GM12878 (cell line): ENCODE measurements at regions of chr22 and their contacts with region 1.

Region 1: GRCh38 chr22:36470162-36470993 is 11.1 kb downstream of the TXN2 start:
- DNase-seq: no peak
- ATAC-seq: peak; percentile 99
- H3K4me3 ChIP-seq: no peak overlapping the region
- H3K27ac ChIP-seq: no peak overlapping the region
- H3K4me1 ChIP-seq: peaks cover 4% of the 10 kb centered on the region
- H3K27me3 ChIP-seq: no peaks in the 10 kb centered on the region
- CTCF ChIP-seq: peak; percentile 96 to 98 (median 98)
- EP300 ChIP-seq: no peak
- POLR2A ChIP-seq: peak; percentile 40; the same call in 1 of the 2 replicates
- RAD21 ChIP-seq: peak; percentile 96

Region 2: GRCh38 chr22:36010882-36011281 is 459.5 kb before region 1 on chr22:
- CTCF ChIA-PET with region 1: no interaction called
- POLR2A ChIA-PET with region 1: no interaction called
- RAD21 ChIA-PET with region 1: no interaction called
- SMC1A ChIA-PET with region 1: no interaction called
- in situ Hi-C with region 1: no loop called
- intact Hi-C with region 1: no loop called
- DNase-seq: no peak
- ATAC-seq: no peak
- H3K4me3 ChIP-seq: no peak overlapping the region
- H3K27ac ChIP-seq: no peak overlapping the region
- H3K4me1 ChIP-seq: no peaks in the 10 kb centered on the region
- H3K27me3 ChIP-seq: no peaks in the 10 kb centered on the region; a peak in 1 of 4 replicates
- CTCF ChIP-seq: no peak
- EP300 ChIP-seq: no peak
- POLR2A ChIP-seq: no peak
- RAD21 ChIP-seq: no peak

Region 3: DNA sequence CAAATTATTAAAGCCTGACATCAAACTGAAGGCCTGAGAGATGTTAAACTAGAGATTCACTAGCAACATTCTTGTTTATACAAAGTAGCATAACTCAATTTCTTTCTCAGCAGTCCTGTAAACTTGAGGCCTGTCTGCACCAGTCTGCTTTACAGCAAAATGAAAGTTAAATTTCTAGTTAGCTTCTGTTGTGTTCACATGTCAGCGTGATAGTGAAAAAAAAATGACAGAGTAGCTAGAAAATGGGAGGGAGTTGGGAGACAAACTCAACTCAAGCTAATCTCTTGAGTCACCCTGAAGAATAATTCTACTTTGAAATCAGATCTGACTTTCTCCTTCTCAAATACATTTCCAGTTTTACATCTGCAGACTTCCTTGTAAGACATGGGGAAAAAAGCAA is 448.2 kb before region 1 on chr22:
- CTCF ChIA-PET with region 1: no interaction called
- POLR2A ChIA-PET with region 1: no interaction called
- RAD21 ChIA-PET with region 1: no interaction called
- SMC1A ChIA-PET with region 1: no interaction called
- in situ Hi-C with region 1: no loop called
- intact Hi-C with region 1: no loop called
- DNase-seq: no peak
- ATAC-seq: no peak
- H3K4me3 ChIP-seq: no peak overlapping the region
- H3K27ac ChIP-seq: no peak overlapping the region
- H3K4me1 ChIP-seq: peaks cover 3% of the 10 kb centered on the region; the same call in 1 of the 2 replicates
- H3K27me3 ChIP-seq: peaks cover 0 to 5% of the 10 kb centered on the region in 2 experiments; a peak in 1 of 4 replicates
- CTCF ChIP-seq: no peak
- EP300 ChIP-seq: no peak
- POLR2A ChIP-seq: no peak
- RAD21 ChIP-seq: no peak

Region 4: DNA sequence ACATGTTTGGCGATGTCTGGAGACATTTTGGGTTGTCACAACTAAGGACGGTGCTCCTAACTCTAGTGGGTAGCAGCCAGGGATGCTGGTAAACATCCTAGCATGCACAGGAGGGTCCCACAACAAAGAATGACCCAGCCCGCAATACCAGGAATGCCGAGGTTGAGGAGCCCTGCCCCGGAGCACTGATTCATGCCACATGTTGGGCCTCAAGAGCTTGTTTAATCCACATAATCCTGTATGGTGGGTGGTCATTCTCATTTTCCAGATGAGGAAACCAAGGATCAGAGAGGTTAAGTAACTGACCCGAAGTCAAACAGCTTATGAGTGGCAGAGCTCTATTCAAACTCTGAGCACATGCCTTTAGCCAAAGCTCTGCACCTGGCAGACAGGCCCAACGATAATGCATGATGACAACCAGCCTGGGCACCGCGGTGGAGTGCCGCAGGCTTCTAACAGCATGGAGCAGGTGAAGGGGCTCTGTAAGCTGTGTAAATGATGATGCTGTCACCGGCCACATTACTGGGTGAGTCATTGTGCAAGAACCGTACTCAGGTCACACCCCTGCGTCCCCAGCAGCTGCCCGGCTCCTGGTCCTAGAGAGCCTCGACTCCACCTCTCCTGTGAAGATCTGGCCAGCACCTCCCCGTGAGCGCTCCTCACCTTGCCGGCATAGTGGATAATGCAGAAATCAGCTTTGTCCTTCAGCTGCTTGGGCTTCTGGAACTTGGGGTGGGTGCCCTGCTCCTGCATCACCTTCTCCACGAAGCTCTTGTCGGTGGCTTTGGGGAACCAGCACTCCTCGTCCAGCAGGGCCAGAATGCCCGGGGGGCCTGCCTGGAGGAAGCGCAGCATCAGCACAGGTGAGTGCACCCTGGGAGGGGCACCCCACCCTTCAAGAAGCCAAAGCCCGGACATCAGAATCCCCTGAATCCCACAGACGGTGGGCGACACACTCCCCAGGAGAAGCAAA is 158.7 kb before region 1 on chr22:
- CTCF ChIA-PET with region 1: interaction called, 20 read pairs
- POLR2A ChIA-PET with region 1: no interaction called
- RAD21 ChIA-PET with region 1: interaction called, 9 read pairs
- SMC1A ChIA-PET with region 1: interaction called, 4 read pairs
- in situ Hi-C with region 1: loop called (anchors 5 kb)
- intact Hi-C with region 1: no loop called
- DNase-seq: no peak
- ATAC-seq: no peak
- H3K4me3 ChIP-seq: no peak overlapping the region
- H3K27ac ChIP-seq: no peak overlapping the region
- H3K4me1 ChIP-seq: no peaks in the 10 kb centered on the region
- H3K27me3 ChIP-seq: no peaks in the 10 kb centered on the region
- CTCF ChIP-seq: no peak
- EP300 ChIP-seq: no peak
- POLR2A ChIP-seq: peak; percentile 36; the same call in 1 of the 2 replicates
- RAD21 ChIP-seq: no peak

Region 5: DNA sequence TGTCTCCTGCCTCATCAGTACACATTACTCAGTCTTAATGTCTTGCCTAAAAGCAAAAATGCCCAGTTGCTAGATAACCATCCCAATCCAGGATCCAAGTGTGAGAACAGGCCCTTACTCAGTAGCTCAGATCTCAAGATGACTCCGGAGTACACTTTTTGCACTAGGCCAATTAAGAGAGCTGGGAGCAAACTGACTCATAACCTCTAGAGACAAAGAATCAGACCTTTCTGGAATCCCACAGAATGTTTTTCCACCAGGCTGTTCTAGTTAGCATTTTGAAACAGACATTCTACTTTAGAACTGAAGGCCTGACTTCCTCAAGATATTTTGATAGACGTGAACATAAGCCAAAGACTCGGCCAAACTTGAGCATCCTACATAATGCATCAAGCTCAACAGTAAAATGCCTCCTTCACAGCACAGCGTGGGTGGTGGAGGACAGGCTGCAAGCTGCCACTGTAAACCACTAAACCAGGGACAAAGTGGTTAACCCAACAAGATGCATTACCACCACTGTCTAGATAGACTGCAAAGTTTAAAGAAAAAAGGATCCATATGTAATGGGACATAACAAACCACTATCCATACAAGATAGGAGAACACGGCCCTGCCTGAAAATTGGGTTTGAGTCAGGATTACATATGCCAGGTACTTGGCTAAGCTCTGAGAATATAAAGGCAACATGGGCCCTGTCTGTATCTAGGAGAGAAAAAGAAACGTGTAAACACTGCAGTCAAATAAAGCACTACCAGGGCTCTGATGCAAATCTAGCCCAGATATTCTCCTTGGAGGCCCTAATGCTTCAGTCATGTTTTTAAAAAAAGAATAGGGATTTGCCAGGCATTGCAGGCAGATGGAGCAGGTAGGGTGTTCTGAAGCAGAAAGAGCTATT is 131.0 kb before region 1 on chr22:
- CTCF ChIA-PET with region 1: interaction called, 12 read pairs
- POLR2A ChIA-PET with region 1: no interaction called
- RAD21 ChIA-PET with region 1: interaction called, 3 read pairs
- SMC1A ChIA-PET with region 1: interaction called, 3 read pairs
- in situ Hi-C with region 1: no loop called
- intact Hi-C with region 1: no loop called
- DNase-seq: no peak
- ATAC-seq: no peak
- H3K4me3 ChIP-seq: no peak overlapping the region
- H3K27ac ChIP-seq: no peak overlapping the region
- H3K4me1 ChIP-seq: peaks cover 4% of the 10 kb centered on the region
- H3K27me3 ChIP-seq: no peaks in the 10 kb centered on the region
- CTCF ChIP-seq: no peak
- EP300 ChIP-seq: no peak
- POLR2A ChIP-seq: no peak
- RAD21 ChIP-seq: no peak

Region 6: DNA sequence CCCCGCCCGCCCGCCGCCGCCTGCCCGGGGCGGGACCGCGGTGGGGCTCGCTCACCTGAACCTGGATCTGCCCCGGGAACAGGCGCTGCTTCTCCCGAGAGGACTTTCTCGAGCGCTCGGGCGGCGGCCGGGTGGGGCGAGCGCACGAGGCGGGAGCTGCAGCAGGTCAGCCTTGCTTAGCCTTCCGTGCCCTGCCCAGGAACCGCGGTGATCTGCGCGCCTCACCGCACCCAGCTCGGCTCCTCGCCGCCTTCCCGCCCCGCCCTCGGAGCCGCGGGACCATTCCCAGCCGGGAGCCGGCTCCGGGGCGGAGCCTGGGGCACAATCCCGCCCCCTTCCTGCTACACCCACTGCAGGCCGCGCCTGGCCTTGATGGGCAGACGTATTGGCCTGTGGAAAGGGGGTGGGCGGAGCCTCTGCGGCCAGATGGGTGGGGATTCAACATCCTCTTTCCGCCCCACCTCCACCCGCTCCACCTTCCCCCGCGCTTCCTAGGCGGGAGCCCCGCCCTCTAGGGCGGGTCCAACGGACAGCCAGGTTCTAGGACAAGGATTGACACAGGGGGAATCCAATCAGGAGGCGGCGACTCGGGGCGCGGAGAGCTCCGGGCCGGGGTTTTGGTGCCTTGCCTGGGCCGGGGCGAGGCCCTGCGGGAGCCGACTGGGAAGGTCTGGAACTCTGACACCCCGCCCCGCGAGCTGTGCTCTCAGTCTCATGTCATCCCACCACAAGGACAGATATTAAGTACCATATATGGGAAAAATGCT is 82.4 kb before region 1 on chr22 and contains the start of gene MYH9:
- CTCF ChIA-PET with region 1: interaction called, 4 read pairs
- POLR2A ChIA-PET with region 1: interaction called, 5 read pairs
- RAD21 ChIA-PET with region 1: interaction called, 8 read pairs
- SMC1A ChIA-PET with region 1: no interaction called
- in situ Hi-C with region 1: no loop called
- intact Hi-C with region 1: loop called (anchors 5 kb)
- DNase-seq: peak; percentile 96
- ATAC-seq: peak; percentile 79
- H3K4me3 ChIP-seq: peak within 1 kb of the TSS; percentile 74
- H3K27ac ChIP-seq: peak within 1 kb of the TSS; percentile 88
- H3K4me1 ChIP-seq: peaks cover 8% of the 10 kb centered on the region
- H3K27me3 ChIP-seq: no peaks in the 10 kb centered on the region
- CTCF ChIP-seq: no peak
- EP300 ChIP-seq: no peak
- POLR2A ChIP-seq: peak; percentile 93
- RAD21 ChIP-seq: no peak
- polyA plus RNA-seq, gene MYH9: 5.1 to 8.1 TPM

Region 7: DNA sequence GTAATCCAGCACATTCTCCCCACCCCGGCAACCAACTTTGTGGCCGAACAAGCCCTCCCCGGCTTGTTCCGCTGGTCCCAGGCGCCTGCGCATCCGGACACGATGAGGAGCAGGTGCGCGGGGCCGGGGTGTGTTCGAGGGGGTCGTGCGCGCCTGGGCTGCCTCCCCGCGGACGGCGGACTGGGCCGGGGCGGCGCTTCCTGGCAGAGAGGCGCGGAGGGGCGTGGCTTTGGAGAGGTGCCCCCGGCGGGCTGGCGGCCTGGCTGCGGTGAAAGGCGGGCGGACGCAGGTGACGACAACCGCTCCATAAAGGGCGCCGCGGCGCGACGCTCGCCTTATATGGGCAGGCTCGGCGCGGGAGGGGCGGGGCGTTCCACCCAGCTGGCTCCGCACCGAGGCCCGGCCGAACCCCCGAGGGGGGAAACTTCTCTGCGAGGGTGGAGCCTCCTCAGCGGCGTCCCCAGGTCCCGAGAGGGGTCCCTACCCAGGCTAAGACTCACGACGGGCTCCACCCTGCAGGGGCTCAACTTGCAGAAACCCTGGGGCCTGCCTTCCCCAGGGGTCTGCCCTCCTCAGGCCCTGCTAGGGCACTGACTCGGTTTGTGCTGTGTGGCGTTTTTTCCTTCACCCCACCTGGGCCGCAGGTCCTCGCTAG is 15.3 kb before region 1 on chr22:
- CTCF ChIA-PET with region 1: interaction called, 7 read pairs
- POLR2A ChIA-PET with region 1: interaction called, 3 read pairs
- RAD21 ChIA-PET with region 1: interaction called, 11 read pairs
- SMC1A ChIA-PET with region 1: no interaction called
- in situ Hi-C with region 1: no loop called
- intact Hi-C with region 1: no loop called
- DNase-seq: peak; percentile 50
- ATAC-seq: peak; percentile 80
- H3K4me3 ChIP-seq: peak overlapping the region; percentile 83
- H3K27ac ChIP-seq: peak overlapping the region; percentile 73
- H3K4me1 ChIP-seq: peaks cover 37% of the 10 kb centered on the region
- H3K27me3 ChIP-seq: no peaks in the 10 kb centered on the region
- CTCF ChIP-seq: peak in 2 of 3 experiments; percentile 10 to 23; a peak in 2 of 6 replicates
- EP300 ChIP-seq: no peak; a peak in 1 of 4 replicates
- POLR2A ChIP-seq: peak; percentile 82
- RAD21 ChIP-seq: peak; percentile 30; the same call in 1 of the 2 replicates